ENCODE measurements at regions of chr6 and their contacts with region 1.

Region 1: GRCh38 chr6:129946439-129947145 is 71.8 kb upstream of the L3MBTL3 start:
- DNase-seq: no peak
- H3K4me3 ChIP-seq: no peak overlapping the region
- H3K27ac ChIP-seq: no peak overlapping the region
- H3K4me1 ChIP-seq: no peaks in the 10 kb centered on the region
- H3K27me3 ChIP-seq: no peaks in the 10 kb centered on the region
- CTCF ChIP-seq: no peak
- EP300 ChIP-seq: no peak
- POLR2A ChIP-seq: no peak

Region 2: DNA sequence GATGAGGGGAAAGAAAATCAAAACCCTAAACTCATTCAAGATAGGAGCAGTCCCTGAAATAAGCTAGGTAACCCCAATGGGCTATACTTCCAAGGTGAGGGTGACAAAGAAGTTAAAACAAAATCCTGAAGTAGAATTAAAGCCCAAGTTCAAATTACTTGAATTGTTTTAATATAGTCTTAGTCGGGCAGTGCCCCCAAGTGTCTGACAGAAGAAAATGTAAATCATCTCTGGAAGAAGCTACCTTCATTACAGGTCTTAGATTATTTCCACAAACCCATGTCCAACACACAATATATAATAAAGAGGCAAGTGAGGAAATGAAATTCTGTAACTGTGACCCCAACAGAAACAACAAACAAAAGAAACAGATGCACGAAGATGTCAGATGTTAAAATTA is 35.0 kb after region 1 on chr6:
- intact Hi-C with region 1: loop called in 1 of 4 experiments (anchors 1 kb)
- DNase-seq: no peak
- H3K4me3 ChIP-seq: no peak overlapping the region
- H3K27ac ChIP-seq: no peak overlapping the region
- H3K4me1 ChIP-seq: no peaks in the 10 kb centered on the region
- H3K27me3 ChIP-seq: no peaks in the 10 kb centered on the region
- CTCF ChIP-seq: no peak
- EP300 ChIP-seq: no peak
- POLR2A ChIP-seq: no peak